ENCODE measurements at regions of chr2 and their contacts with region 1.

Region 1: GRCh38 chr2:54570925-54571694 is 115.0 kb downstream of the SPTBN1 start:
- DNase-seq: peak in 12 of 14 experiments; percentile 39 to 87 (median 64)
- ATAC-seq: peak; percentile 14
- H3K4me3 ChIP-seq: peak overlapping the region; percentile 31
- H3K4me3 Mint-ChIP-seq: peak overlapping the region; percentile 81
- H3K27ac ChIP-seq: peak overlapping the region; percentile 89 to 98
- H3K27ac Mint-ChIP-seq: peak overlapping the region; percentile 96
- H3K4me1 ChIP-seq: peaks cover 90% of the 10 kb centered on the region
- H3K4me1 Mint-ChIP-seq: peaks cover 95% of the 10 kb centered on the region
- H3K27me3 ChIP-seq: no peaks in the 10 kb centered on the region
- H3K27me3 Mint-ChIP-seq: no peaks in the 10 kb centered on the region
- CTCF ChIP-seq: no peak

Region 2: DNA sequence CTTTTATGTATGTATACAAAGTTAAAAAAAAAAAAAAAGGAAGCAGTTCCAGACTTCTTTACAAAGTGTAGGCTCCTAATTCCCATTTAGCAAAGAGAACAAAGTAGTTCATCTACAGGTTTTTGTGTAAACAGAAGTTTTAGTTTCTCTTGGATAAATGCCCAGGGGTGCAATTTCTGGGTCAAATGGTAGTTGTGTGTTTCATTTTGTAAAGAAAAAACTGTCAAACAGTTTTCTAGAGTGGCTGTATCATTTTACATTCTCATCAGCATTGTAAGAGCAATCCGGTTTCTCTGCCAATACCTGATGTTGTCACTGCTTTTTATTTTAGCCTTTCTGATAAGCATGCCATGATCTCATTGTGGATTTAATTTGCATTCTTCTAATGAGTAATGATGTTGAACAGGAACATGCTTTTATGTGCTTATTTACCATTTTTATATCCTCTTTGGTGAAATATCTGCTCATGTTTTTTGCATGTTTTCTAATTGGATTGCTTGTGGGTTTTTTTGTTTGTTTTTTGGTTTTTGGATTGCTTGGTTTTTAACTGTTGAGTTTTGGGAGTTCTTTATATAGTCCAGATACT is 583.7 kb before region 1 on chr2:
- CTCF ChIA-PET with region 1: no interaction called
- POLR2A ChIA-PET with region 1: no interaction called
- intact Hi-C with region 1: no loop called
- DNase-seq: no peak
- ATAC-seq: peak; percentile 17
- H3K4me3 ChIP-seq: no peak overlapping the region
- H3K4me3 Mint-ChIP-seq: no peak overlapping the region
- H3K27ac ChIP-seq: no peak overlapping the region
- H3K27ac Mint-ChIP-seq: peak overlapping the region; percentile 57
- H3K4me1 ChIP-seq: peaks cover 3% of the 10 kb centered on the region
- H3K4me1 Mint-ChIP-seq: peaks cover 26% of the 10 kb centered on the region
- H3K27me3 ChIP-seq: no peaks in the 10 kb centered on the region
- H3K27me3 Mint-ChIP-seq: no peaks in the 10 kb centered on the region
- CTCF ChIP-seq: no peak

Region 3: DNA sequence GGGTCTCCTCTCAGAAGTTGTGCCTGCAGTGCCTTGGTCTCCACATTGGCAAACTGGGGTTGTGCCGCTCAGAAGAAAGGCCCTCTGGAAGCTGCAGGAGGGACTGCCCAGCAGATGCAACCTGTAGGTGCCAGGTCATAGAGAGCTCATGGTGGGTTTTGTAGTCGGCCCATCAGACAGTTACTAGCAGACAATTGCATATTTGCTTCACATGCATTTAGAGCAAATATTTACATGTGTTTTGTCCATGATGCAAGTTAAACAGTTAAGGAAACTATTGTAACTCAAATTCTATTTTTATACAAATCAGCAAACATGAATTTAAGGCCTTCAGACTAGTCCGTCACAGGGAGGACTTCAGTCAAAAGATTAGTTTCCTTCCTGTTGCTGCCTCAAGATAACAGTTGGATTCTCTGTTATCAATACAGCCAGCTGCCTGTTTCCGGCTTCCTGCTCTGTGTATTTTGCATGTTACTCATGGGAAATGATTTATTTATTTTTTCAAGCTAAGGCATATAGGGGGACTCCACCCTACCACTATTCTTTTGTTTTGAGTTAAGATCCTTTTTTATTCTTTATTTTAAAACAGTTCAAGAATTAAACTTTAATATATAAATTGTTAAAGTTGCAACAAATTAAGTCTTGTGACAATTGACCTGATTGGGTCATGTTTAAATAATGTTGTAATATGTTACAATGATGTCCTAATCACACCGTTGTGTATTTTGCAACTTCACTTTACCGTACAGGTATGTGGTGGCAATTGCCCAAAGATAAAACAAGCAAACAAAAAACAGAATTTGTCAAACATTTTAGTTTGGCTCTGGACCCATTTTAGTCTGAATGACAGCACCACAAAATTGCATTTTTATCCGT is 18.5 kb after region 1 on chr2:
- CTCF ChIA-PET with region 1: no interaction called
- POLR2A ChIA-PET with region 1: interaction called, 22 read pairs
- intact Hi-C with region 1: loop called in 1 of 2 experiments (anchors 1 kb)
- DNase-seq: peak in 8 of 14 experiments; percentile 40 to 81 (median 54)
- ATAC-seq: peak; percentile 61
- H3K4me3 ChIP-seq: peak overlapping the region; percentile 27
- H3K4me3 Mint-ChIP-seq: peak overlapping the region; percentile 74
- H3K27ac ChIP-seq: peak overlapping the region; percentile 74 to 80
- H3K27ac Mint-ChIP-seq: peak overlapping the region; percentile 96
- H3K4me1 ChIP-seq: peaks cover 61% of the 10 kb centered on the region
- H3K4me1 Mint-ChIP-seq: peaks cover 98% of the 10 kb centered on the region
- H3K27me3 ChIP-seq: no peaks in the 10 kb centered on the region
- H3K27me3 Mint-ChIP-seq: no peaks in the 10 kb centered on the region
- CTCF ChIP-seq: no peak